ENCODE measurements at regions of chr16 and their contacts with region 1.

Region 1: DNA sequence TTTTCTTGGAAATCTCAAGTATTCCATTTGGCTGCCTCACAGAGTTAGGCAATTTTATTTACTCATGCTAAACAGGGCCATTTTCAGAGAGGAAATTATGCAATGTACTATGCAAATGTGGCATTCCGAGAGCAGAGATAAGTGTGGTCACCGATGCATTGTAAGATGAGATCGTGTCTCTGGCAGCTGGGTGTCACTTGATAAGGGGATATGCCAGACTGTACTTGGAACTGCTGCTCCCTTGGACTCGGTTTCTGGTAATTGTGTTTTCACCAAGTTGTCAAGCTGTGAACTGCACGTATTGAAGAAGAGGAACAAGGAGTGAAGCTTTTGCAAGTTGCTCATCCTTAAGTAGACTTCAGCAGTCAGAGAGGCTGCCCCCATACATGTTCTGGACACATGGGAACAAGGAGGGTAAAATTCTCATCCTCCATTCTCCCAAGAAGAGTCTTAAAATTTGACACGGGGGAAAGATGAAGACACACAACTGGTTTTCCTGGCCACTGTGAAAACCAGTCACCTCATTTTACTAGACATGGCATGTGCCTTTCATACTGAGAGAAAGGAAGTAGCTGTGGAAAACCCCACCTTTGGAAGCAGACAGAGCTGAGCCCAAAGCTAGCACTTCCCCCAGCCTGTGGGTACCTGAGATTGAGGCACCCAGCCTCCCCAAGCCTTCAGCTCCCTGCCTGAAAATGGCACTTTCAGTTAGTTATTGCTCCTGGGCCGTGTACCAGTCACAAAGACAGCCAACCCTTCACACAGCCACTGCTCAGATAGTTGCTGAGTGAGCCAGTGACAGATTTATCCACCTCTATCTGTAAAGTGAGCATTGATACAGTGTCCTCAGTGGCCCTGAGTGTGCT is 150.7 kb downstream of the SOCS1 start:
- DNase-seq: peak; percentile 51
- H3K4me3 Mint-ChIP-seq: peak overlapping the region; percentile 55
- H3K27ac Mint-ChIP-seq: peak overlapping the region; percentile 92
- H3K4me1 Mint-ChIP-seq: peaks cover 82% of the 10 kb centered on the region
- H3K27me3 Mint-ChIP-seq: no peaks in the 10 kb centered on the region

Region 2: DNA sequence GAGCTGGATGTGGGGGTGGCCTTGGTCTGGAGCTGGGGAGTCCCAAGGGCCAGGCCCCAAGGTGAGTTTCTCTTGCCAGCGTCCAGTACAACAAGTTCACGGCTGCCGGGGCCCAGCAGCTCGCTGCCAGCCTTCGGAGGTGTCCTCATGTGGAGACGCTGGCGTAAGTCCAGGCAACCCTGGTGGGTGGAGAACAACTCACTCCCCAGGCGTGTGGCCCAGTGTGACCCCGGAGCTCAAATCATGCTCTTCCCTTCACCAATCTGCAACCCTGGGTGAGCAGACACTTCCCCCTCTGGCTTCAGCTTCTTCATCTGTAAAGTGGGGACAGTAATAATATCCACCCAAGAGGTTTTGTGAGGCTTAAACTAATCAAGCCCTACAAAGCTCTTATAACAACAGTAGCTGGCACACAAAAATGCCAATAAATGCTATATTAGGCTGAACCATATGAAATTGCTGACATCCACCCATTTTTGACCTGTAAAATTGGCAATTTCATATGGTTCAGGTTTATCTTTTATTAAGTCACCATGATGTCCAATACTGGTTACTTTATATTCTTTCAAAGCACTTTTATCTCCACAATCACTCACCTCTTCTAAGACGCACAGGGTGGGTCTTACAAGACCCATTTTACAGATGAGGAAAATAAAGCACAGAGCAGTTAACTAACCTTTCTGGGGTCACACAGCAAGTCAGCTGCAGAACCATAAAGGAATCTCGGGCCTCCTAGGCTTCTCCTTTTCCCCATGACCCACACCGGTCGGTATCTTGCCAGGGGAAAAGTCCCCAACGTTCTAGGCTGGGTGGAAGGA is 182.7 kb before region 1 on chr16:
- intact Hi-C with region 1: no loop called
- DNase-seq: no peak
- H3K4me3 Mint-ChIP-seq: no peak overlapping the region
- H3K27ac Mint-ChIP-seq: no peak overlapping the region
- H3K4me1 Mint-ChIP-seq: peaks cover 8% of the 10 kb centered on the region
- H3K27me3 Mint-ChIP-seq: no peaks in the 10 kb centered on the region

Region 3: DNA sequence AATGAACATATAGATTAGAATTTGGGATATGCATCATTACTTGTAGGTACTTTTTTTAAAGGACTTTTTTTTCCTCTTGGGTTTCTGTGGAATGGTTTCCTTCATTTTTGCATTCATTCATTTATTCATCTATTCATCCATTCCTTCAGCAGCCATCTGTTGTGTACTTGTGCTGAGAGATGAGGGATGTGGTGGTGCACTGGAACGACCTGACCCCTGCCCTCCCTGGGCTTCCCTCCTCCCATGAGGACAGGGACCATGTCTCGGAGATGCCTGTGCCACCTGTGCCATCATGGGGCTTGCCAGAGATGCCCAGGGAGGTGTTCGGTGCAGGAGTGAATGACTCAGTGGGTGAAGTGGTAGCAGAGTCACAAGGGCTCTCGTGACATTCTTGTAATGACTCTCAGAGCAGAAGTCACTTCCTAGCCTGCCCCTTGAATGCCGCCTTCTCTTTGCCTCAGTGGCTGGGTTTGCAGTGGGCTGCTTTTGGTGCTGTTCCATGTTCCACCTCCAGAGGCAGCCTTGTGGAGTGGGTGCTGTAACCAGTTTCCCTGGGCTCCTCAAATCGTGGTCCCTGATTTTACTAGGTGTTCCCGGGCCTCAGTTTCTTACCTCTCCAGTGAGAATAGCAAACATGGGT is 117.0 kb before region 1 on chr16:
- intact Hi-C with region 1: loop called (anchors 1 kb)
- DNase-seq: peak; percentile 63
- H3K4me3 Mint-ChIP-seq: peak overlapping the region; percentile 62
- H3K27ac Mint-ChIP-seq: peak overlapping the region; percentile 84
- H3K4me1 Mint-ChIP-seq: peaks cover 81% of the 10 kb centered on the region
- H3K27me3 Mint-ChIP-seq: no peaks in the 10 kb centered on the region

Region 4: DNA sequence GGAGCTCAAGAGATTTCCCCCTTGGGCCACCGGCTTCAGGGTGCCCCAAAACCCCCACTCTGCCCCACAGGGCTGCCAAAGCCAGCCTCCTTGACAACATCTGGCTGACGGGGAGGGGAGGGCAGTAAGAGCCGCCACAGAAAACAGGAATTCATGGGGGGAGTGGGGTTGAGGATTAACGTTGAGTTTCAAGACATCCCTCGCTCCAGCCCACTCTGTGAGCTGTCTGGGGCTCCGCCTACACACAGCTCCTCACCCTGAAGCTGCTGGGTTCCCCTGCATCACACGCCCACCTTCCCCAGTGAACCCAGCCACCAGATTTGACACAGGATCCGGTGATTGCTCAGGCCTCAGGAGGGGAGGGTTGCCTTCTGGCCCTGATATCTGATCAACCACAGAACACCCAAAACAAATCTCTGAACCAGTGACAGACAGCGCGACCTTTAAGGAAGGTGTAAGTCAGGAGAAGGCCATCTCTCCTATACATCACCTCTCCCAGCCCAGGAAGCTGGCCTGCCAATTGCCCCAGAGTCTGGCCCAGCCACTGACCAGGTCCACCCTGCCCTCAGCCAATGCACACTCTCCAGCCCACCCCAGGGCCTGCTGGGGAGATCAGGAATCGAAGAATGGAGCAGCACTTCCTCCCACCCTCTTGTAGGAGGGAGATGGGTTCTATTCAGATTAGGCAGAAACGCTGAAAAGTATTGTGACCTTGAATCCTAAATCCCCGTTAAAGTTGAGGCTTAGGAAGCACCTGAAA is 28.8 kb before region 1 on chr16:
- intact Hi-C with region 1: loop called (anchors 1 kb)
- DNase-seq: peak; percentile 70
- H3K4me3 Mint-ChIP-seq: peak overlapping the region; percentile 31
- H3K27ac Mint-ChIP-seq: peak overlapping the region; percentile 94
- H3K4me1 Mint-ChIP-seq: peaks cover 95% of the 10 kb centered on the region
- H3K27me3 Mint-ChIP-seq: no peaks in the 10 kb centered on the region

Region 5: DNA sequence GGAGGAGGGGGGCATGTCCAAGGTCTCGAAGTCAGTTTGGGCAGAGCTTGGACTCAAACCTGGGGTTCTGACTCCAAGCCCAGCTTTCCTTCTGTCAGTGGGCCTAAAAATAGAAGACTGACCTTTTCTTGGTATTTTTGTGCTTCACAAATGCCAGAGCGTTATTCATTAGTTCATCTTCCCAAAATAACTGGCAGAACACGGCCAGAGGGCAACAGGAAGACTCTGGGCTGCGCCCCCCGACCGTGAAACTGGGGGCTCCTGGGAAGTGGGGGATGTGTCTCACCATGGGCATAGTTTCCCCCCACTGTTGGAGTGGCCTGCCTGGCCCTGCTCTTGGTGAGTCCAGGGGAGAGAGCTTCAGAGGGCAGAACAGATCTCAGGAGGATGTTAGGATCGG is 56.7 kb after region 1 on chr16:
- intact Hi-C with region 1: loop called (anchors 1 kb)
- DNase-seq: no peak
- H3K4me3 Mint-ChIP-seq: no peak overlapping the region
- H3K27ac Mint-ChIP-seq: peak overlapping the region; percentile 90
- H3K4me1 Mint-ChIP-seq: peaks cover 65% of the 10 kb centered on the region
- H3K27me3 Mint-ChIP-seq: no peaks in the 10 kb centered on the region

Region 6: DNA sequence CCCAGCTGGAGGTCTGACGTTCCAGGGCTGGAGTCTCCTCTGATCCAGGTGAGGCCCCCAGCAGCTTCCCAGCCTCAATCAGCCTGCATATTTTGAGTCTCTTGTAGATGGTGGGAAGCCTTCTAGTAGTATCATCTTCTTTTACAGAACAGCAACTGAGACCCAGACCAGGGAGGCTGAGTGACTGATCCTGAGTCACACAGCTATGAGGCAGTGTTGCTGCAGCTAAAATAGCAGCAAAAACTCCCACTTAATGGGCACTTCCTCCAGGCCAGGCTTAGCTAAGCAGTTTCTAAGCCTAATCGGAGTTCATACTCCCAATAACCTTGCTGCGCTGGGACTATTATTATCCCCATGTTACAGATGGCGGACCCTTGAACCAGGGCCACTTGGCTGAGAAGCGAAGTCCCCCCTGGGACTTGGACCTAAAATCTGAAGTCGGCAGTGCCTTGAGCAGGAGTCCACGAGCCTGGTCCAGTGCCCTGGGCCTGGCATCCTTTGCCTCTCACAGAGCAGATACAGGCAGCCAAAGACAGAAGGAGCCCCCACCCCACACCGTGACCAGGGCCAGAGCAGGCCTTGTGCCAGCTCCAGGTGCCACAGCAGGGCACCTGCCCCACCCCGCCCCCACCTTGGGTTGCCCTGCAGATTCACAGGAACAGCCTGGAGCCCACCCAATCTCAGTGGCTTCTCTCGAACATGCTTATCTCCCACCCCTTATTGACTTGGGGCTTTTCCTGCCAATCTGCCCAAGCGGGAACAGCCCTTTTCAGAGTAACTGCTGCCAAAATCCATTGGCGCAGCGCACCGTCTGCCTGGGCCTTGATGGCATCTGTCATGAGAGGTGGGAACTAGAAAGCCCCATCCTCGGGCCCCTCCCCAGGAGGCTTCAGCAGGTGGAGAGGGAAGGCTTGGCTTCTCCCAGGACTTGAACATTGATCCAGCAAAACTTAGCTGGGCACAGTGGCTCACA is 85.6 kb after region 1 on chr16:
- intact Hi-C with region 1: no loop called
- DNase-seq: no peak
- H3K4me3 Mint-ChIP-seq: no peak overlapping the region
- H3K27ac Mint-ChIP-seq: peak overlapping the region; percentile 50
- H3K4me1 Mint-ChIP-seq: peaks cover 46% of the 10 kb centered on the region
- H3K27me3 Mint-ChIP-seq: no peaks in the 10 kb centered on the region

Region 7: GRCh38 chr16:11224096-11224893 is 119.0 kb after region 1 on chr16:
- intact Hi-C with region 1: loop called (anchors 1 kb)
- DNase-seq: peak; percentile 70
- H3K4me3 Mint-ChIP-seq: peak overlapping the region; percentile 76
- H3K27ac Mint-ChIP-seq: peak overlapping the region; percentile 100
- H3K4me1 Mint-ChIP-seq: peaks cover 50% of the 10 kb centered on the region
- H3K27me3 Mint-ChIP-seq: no peaks in the 10 kb centered on the region

Region 8: GRCh38 chr16:11356573-11357331 is 251.5 kb after region 1 on chr16:
- intact Hi-C with region 1: loop called (anchors 5 kb)
- DNase-seq: peak; percentile 33
- H3K4me3 Mint-ChIP-seq: no peak overlapping the region
- H3K27ac Mint-ChIP-seq: no peak overlapping the region
- H3K4me1 Mint-ChIP-seq: peaks cover 68% of the 10 kb centered on the region
- H3K27me3 Mint-ChIP-seq: no peaks in the 10 kb centered on the region